Activated T-helper 2 cell treated with anti-CD3 and anti-CD28 coated beads, Interferon-gamma antibody, Interleukin-2, Interleukin-4, amounts not matched to agents 10 μg/mL and 5 μg/mL and 100 μg/mL, durations not matched to agents 14 hours and 24 hours and 36 hours (primary cell): ENCODE measurements at regions of chr5 and their contacts with region 1.

Region 1: GRCh38 chr5:14270209-14270702 is 127.1 kb downstream of the TRIO start:
- DNase-seq: no peak
- H3K4me3 Mint-ChIP-seq: no peak overlapping the region
- H3K27ac Mint-ChIP-seq: no peak overlapping the region
- H3K4me1 Mint-ChIP-seq: peaks cover 7% of the 10 kb centered on the region
- H3K27me3 Mint-ChIP-seq: peaks cover 16% of the 10 kb centered on the region

Region 2: GRCh38 chr5:13987843-13988464 is 282.3 kb before region 1 on chr5:
- intact Hi-C with region 1: loop called (anchors 5 kb)
- DNase-seq: no peak
- H3K4me3 Mint-ChIP-seq: no peak overlapping the region
- H3K27ac Mint-ChIP-seq: no peak overlapping the region
- H3K4me1 Mint-ChIP-seq: no peaks in the 10 kb centered on the region
- H3K27me3 Mint-ChIP-seq: no peaks in the 10 kb centered on the region

Region 3: GRCh38 chr5:14108170-14108996 is 161.9 kb before region 1 on chr5:
- intact Hi-C with region 1: loop called (anchors 5 kb)
- DNase-seq: no peak
- H3K4me3 Mint-ChIP-seq: no peak overlapping the region
- H3K27ac Mint-ChIP-seq: no peak overlapping the region
- H3K4me1 Mint-ChIP-seq: peaks cover 16% of the 10 kb centered on the region
- H3K27me3 Mint-ChIP-seq: peaks cover 14% of the 10 kb centered on the region

Region 4: DNA sequence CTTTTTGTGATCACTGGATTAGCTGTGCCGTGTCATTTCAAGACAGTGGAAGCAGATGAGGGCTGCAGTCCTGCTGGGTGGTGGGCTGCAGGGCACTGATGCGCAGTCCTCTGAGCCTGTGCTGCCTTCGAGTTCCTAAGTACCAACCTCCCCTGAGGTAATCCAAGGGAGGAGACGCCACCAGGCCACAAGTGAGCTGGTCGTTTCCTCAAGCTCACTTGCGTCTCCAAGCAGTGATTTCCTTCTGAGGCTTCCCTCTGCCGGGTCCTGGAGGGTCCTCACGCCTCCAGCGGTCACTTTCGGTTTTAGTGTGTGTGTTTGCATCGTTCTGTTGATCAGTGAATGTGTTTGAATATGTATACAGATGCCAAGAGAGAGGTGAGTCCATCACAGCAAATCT is 11.4 kb before region 1 on chr5:
- intact Hi-C with region 1: no loop called
- DNase-seq: no peak
- H3K4me3 Mint-ChIP-seq: no peak overlapping the region
- H3K27ac Mint-ChIP-seq: no peak overlapping the region
- H3K4me1 Mint-ChIP-seq: no peaks in the 10 kb centered on the region
- H3K27me3 Mint-ChIP-seq: peaks cover 14% of the 10 kb centered on the region